Lower leg skin (tissue), 4 donors: ENCODE measurements at regions of chr1 and their contacts with region 1.

Region 1: GRCh38 chr1:203216274-203217138 is 13.0 kb downstream of the CHIT1 start:
- DNase-seq: peak; percentile 45 to 86
- H3K4me3 ChIP-seq: no peak overlapping the region
- CTCF ChIP-seq: peak in 1 of 3 donors; percentile 10
- POLR2A ChIP-seq: no peak

Region 2: DNA sequence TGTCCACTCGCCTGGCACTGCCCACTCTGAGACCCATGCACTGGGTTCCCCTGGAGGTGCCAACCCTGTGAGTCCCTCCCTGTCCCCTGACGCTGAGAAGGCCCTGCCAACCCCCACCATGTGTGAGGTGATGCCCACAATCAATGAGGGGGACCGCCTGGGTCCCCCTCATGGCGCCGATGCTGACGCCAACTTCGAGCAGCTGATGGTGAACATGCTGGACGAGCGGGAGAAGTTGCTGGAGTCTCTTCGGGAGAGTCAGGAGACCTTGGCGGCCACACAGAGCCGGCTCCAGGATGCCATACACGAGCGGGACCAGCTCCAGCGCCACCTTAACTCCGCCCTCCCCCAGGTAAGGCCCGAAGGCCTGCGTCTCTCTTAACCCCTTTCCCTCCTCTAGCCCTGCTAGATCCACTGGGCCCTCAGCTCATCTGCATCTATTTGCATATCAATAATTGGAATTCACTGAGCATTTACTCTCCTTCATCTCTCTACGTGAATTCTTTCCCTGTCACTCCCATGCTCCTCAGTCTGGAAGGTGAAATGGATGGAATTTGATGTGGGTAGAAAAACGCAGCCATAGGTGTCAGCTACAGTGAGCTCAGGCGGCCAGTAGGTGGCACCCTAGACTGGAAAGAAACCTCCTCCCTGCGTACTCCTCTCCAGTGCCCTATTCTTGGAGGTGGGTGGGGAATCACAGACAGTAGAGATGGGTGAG is 177.5 kb before region 1 on chr1:
- intact Hi-C with region 1: loop called (anchors 5 kb)
- DNase-seq: peak; percentile 63 to 89
- H3K4me3 ChIP-seq: no peak overlapping the region
- CTCF ChIP-seq: peak in 1 of 3 donors; percentile 87
- POLR2A ChIP-seq: no peak

Region 3: GRCh38 chr1:203117611-203118575 is 98.6 kb before region 1 on chr1:
- intact Hi-C with region 1: loop called (anchors 5 kb)
- DNase-seq: peak; percentile 48 to 88
- H3K4me3 ChIP-seq: no peak overlapping the region
- CTCF ChIP-seq: no peak
- POLR2A ChIP-seq: no peak

Region 4: DNA sequence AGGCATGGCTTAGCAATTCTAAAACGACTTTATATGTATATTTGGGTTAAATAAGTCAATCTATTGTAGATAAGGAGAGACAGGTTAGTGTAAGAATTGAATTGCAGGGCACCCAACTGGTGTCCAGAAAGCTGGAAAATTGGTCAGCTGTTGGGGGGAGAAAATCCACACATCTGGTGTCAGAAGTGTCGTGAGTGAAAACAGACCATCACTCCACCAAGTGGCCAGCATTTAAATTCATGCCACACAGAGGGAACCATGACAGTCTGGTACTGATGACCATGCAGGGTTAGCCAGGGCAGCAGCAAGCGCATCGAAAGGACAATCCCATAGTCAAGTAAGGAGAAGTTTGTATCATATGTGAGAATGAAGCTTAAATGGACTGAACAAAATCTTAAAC is 560.1 kb after region 1 on chr1:
- intact Hi-C with region 1: no loop called
- DNase-seq: no peak
- H3K4me3 ChIP-seq: no peak overlapping the region
- CTCF ChIP-seq: no peak
- POLR2A ChIP-seq: no peak